K562 (cell line): ENCODE measurements at regions of chr6 and their contacts with region 1.

Region 1: DNA sequence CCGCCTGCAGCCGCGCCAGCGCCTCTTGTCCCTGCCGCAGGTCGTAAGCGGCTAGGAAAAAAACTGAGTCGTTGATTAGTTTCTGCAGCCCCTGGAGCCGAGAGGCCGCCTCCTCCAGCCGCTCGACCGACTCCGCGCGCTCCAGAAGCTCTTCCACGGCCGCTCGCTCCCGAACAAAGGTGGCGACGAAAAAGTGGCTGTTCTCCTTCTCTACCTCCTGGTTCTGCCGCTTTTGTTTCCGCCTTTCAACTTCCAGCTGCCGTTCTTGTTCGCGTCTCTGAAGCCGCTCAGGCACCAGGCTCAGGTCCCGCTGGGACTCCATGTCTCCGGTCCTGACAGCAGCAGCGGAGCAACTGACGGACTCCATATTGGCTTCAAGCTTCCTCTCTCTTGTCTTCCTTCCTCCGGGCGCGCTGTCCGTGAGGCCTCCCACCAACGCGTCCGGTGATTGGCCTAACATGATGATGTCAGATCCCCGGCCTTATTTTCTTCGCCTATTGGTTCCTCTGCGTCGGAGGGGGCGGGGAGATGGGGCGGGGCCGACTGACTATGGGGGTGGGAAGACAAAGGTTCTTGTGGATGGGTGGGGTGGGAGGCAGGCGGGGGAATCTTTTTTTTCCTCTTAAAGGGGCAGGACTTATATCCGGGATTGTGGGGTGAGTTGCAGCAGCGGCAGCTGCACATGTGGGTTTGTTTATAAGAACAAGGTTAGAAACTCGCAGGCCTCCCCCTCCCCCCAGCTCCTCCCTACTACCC is at the start of gene TBCC:
- DNase-seq: peak; percentile 98 to 100 (median 98)
- ATAC-seq: peak; percentile 83
- H3K4me3 ChIP-seq: peak within 1 kb of the TSS; percentile 90
- H3K27ac ChIP-seq: peak within 1 kb of the TSS; percentile 92
- H3K4me1 ChIP-seq: peaks cover 13 to 29% of the 10 kb centered on the region in 2 experiments
- H3K27me3 ChIP-seq: no peaks in the 10 kb centered on the region
- CTCF ChIP-seq: no peak
- EP300 ChIP-seq: no peak
- POLR2A ChIP-seq: peak; percentile 98
- RAD21 ChIP-seq: no peak
- polyA plus RNA-seq, gene TBCC: 2.8 to 5.0 TPM

Region 2: GRCh38 chr6:42563697-42564505 is 182.0 kb before region 1 on chr6 and contains the start of gene UBR2:
- CTCF ChIA-PET with region 1: no interaction called
- POLR2A ChIA-PET with region 1: interaction called, 6 read pairs
- in situ Hi-C with region 1: no loop called
- intact Hi-C with region 1: loop called (anchors 5 kb)
- DNase-seq: peak; percentile 91 to 100 (median 94)
- ATAC-seq: peak; percentile 95
- H3K4me3 ChIP-seq: peak within 1 kb of the TSS; percentile 61
- H3K27ac ChIP-seq: peak within 1 kb of the TSS; percentile 84
- H3K4me1 ChIP-seq: peaks cover 4% of the 10 kb centered on the region in 2 experiments; a peak in 4 of 5 replicates
- H3K27me3 ChIP-seq: no peaks in the 10 kb centered on the region
- CTCF ChIP-seq: peak; percentile 42 to 67 (median 61)
- EP300 ChIP-seq: peak; percentile 63; the same call in 1 of the 2 replicates
- POLR2A ChIP-seq: peak; percentile 95
- RAD21 ChIP-seq: 0 out of 4 replicates have a peak, but pooled peaks of 1 of the 2 experiments have one; percentile 3
- polyA plus RNA-seq, gene UBR2: 9.1 to 13.1 TPM

Region 3: GRCh38 chr6:42726485-42727086 is 19.3 kb before region 1 on chr6:
- CTCF ChIA-PET with region 1: no interaction called
- POLR2A ChIA-PET with region 1: interaction called, 16 read pairs
- in situ Hi-C with region 1: no loop called
- intact Hi-C with region 1: no loop called
- DNase-seq: peak; percentile 87 to 92 (median 90)
- ATAC-seq: peak; percentile 90
- H3K4me3 ChIP-seq: no peak overlapping the region
- H3K27ac ChIP-seq: no peak overlapping the region
- H3K4me1 ChIP-seq: peaks cover 6 to 8% of the 10 kb centered on the region in 2 experiments; a peak in 4 of 5 replicates
- H3K27me3 ChIP-seq: peaks cover 7 to 11% of the 10 kb centered on the region in 2 experiments
- CTCF ChIP-seq: peak; percentile 94 to 98 (median 98)
- EP300 ChIP-seq: peak; percentile 27; the same call in 1 of the 2 replicates
- POLR2A ChIP-seq: no peak
- RAD21 ChIP-seq: peak; percentile 99

Region 4: DNA sequence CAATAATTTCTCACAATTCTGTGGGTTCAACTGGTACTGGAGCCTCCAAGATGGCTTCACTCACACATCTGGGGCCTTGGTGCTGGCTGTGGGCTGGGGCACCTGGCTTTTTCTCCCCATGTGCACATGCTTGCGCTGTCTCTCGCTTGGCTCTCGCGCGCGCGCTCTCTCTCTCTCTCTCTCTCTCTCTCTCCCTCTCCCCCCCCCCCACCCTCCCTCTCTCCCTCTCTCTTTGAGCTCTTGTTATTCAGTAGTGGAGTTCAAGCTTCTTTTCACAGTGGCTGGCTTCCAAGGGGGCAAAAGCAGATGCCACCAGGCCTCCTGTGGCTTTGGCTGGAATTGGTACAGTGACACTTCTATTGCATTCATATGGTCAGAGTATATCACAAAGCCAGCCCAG is 10.8 kb after region 1 on chr6:
- CTCF ChIA-PET with region 1: no interaction called
- POLR2A ChIA-PET with region 1: interaction called, 28 read pairs
- in situ Hi-C with region 1: no loop called
- intact Hi-C with region 1: no loop called
- DNase-seq: no peak
- ATAC-seq: no peak
- H3K4me3 ChIP-seq: no peak overlapping the region
- H3K27ac ChIP-seq: no peak overlapping the region
- H3K4me1 ChIP-seq: no peaks in the 10 kb centered on the region
- H3K27me3 ChIP-seq: no peaks in the 10 kb centered on the region
- CTCF ChIP-seq: no peak
- EP300 ChIP-seq: no peak
- POLR2A ChIP-seq: no peak
- RAD21 ChIP-seq: no peak

Region 5: GRCh38 chr6:42764911-42765648 is 19.2 kb after region 1 on chr6:
- CTCF ChIA-PET with region 1: no interaction called
- POLR2A ChIA-PET with region 1: interaction called, 28 read pairs
- in situ Hi-C with region 1: no loop called
- intact Hi-C with region 1: no loop called
- DNase-seq: no peak
- ATAC-seq: no peak
- H3K4me3 ChIP-seq: no peak overlapping the region
- H3K27ac ChIP-seq: no peak overlapping the region
- H3K4me1 ChIP-seq: no peaks in the 10 kb centered on the region
- H3K27me3 ChIP-seq: no peaks in the 10 kb centered on the region
- CTCF ChIP-seq: no peak
- EP300 ChIP-seq: no peak
- POLR2A ChIP-seq: no peak
- RAD21 ChIP-seq: no peak

Region 6: DNA sequence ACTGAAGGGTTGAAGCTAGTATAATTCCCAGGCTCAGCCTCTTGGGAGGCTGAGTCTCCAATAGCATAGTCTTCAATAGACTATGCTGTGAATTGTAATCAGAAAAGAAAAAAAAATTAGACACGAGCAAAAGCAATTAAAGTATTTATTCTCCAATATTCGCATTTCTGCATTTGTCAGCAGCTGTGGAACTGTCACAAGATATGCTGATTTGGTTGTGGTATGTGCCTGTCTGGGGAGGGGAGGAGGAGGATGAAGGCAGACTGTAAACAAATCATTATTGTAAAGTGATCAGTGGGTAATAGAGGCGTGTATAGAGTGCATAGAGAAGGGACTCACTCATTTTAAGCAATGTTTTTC is 25.8 kb after region 1 on chr6:
- CTCF ChIA-PET with region 1: no interaction called
- POLR2A ChIA-PET with region 1: interaction called, 10 read pairs
- in situ Hi-C with region 1: no loop called
- intact Hi-C with region 1: no loop called
- DNase-seq: no peak
- ATAC-seq: no peak
- H3K4me3 ChIP-seq: no peak overlapping the region
- H3K27ac ChIP-seq: no peak overlapping the region
- H3K4me1 ChIP-seq: peaks cover 4% of the 10 kb centered on the region in 2 experiments; a peak in 2 of 5 replicates
- H3K27me3 ChIP-seq: no peaks in the 10 kb centered on the region
- CTCF ChIP-seq: no peak
- EP300 ChIP-seq: no peak
- POLR2A ChIP-seq: no peak
- RAD21 ChIP-seq: no peak

Region 7: DNA sequence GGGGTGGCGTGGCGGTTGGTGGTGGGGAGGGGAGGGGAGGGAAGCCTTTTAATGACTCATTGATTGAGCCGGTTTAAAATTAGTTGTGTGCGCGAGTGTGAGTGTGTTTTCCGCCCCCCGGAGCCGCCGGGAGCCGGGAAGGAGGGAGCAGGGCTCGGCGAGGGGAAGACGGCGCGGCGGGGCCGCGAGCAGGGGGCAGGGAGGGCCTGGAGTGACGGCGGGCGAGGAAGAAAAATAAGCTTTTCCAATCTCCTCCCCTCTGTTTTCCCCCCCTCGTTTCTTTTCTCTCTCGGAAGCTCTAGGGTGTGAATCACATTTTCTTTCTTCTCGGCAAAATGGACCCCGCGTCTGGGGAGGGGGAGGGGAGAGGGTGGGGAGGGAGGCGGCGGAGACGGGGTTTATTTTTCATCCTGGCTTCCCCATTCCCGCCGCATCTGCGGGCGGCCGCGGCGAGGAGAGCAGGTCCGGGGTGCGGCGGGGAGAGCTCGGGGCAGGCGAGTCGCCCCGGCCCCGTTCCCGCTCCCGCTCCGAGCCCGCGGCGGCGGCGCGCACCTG is 36.8 kb after region 1 on chr6:
- CTCF ChIA-PET with region 1: no interaction called
- POLR2A ChIA-PET with region 1: interaction called, 73 read pairs
- in situ Hi-C with region 1: no loop called
- intact Hi-C with region 1: loop called (anchors 1 kb)
- DNase-seq: peak; percentile 87 to 92 (median 90)
- ATAC-seq: peak; percentile 45
- H3K4me3 ChIP-seq: peak overlapping the region; percentile 77
- H3K27ac ChIP-seq: peak overlapping the region; percentile 91
- H3K4me1 ChIP-seq: peaks cover 35 to 53% of the 10 kb centered on the region in 2 experiments
- H3K27me3 ChIP-seq: no peaks in the 10 kb centered on the region
- CTCF ChIP-seq: no peak
- EP300 ChIP-seq: no peak; the same call in 1 of the 2 replicates
- POLR2A ChIP-seq: peak; percentile 86
- RAD21 ChIP-seq: no peak

Region 8: GRCh38 chr6:42978839-42979522 is 233.1 kb after region 1 on chr6 and contains the start of gene PEX6:
- CTCF ChIA-PET with region 1: no interaction called
- POLR2A ChIA-PET with region 1: no interaction called
- in situ Hi-C with region 1: no loop called
- intact Hi-C with region 1: no loop called
- DNase-seq: peak; percentile 94 to 98 (median 94)
- ATAC-seq: peak; percentile 91
- H3K4me3 ChIP-seq: peak within 1 kb of the TSS; percentile 95
- H3K27ac ChIP-seq: peak within 1 kb of the TSS; percentile 88
- H3K4me1 ChIP-seq: peaks cover 25 to 32% of the 10 kb centered on the region in 2 experiments; a peak in 4 of 5 replicates
- H3K27me3 ChIP-seq: no peaks in the 10 kb centered on the region
- CTCF ChIP-seq: peak in 1 of 3 experiments; percentile 3; a peak in 1 of 6 replicates
- EP300 ChIP-seq: peak; percentile 41; the same call in 1 of the 2 replicates
- POLR2A ChIP-seq: peak; percentile 97
- RAD21 ChIP-seq: no peak; a peak in 1 of 4 replicates
- polyA plus RNA-seq, gene PEX6: 0.17 to 0.77 TPM